Transverse colon (tissue), 4 donors: ENCODE measurements at regions of chr18 and their contacts with region 1.

Region 1: DNA sequence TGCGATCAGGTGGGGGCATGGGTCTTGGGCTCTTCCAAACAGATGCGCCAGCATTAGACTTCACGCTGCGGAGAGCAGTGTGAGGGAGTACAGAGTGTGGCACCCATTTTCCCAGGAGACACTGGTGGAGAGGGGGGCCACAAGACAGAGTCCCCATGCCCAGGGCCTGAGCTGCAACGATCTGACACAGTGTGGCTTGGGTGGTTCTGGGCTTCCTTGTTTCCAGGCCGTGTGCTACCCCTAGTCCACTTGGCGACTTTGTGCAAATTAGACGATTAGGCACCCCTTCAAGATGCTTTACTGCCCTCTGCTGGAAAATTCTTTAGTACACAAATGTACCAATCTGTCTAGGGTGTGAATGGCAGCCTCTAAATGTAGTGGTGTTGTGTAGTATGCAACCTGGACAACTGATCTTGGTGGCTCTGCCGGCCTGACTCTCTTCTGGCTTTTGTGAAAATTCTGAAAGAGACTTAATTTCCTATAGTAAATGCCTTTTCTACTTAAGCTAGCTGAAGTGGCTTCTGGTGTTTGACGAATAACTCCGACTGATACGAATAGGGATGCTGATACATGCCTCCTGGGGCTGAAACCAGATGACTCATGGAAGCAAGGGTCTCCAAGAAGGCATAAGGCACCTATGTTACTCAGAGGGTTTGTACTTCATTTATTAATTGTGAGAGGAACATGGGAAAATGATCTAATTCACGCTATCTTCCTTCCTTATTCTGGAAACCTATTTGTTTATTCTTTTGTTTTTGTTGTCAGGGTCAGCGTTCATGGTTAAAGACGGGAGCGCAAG is 92.3 kb upstream of the SMAD2 start:
- DNase-seq: no peak
- H3K4me3 ChIP-seq: no peak overlapping the region
- H3K27ac ChIP-seq: no peak overlapping the region
- H3K4me1 ChIP-seq: peaks cover 0 to 5% (median 0%) of the 10 kb centered on the region in 4 donors
- H3K27me3 ChIP-seq: peaks cover 23% of the 10 kb centered on the region
- CTCF ChIP-seq: peak; percentile 40 to 66 (median 55)
- EP300 ChIP-seq: no peak
- POLR2A ChIP-seq: no peak

Region 2: DNA sequence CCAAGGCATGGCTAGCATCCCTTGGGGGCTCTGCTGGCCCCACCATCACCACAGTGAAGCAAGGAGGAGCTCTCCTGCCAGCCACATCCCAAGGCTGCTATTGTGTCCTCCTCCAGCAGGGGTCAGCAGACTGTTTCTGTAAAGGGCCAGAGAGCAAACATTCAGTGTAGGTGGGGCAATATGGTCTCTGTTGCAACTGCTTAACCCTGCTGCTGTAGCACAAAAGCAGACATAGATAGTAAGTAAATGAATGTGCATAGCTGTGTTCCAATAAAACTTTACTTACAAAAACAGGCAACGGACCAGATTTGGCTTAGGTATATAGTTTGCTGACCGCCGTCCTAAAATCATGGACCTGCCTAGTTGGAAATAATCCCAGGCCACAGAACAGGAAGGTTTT is 422.8 kb after region 1 on chr18:
- in situ Hi-C with region 1: loop called in 1 of 4 experiments (anchors 10 kb)
- intact Hi-C with region 1: no loop called
- DNase-seq: peak; percentile 83
- H3K4me3 ChIP-seq: no peak overlapping the region
- H3K27ac ChIP-seq: no peak overlapping the region
- H3K4me1 ChIP-seq: peaks cover 0 to 7% (median 3%) of the 10 kb centered on the region in 4 donors
- H3K27me3 ChIP-seq: peaks cover 20% of the 10 kb centered on the region
- CTCF ChIP-seq: peak; percentile 73 to 87 (median 81)
- EP300 ChIP-seq: no peak
- POLR2A ChIP-seq: no peak